ENCODE measurements at regions of chr5 and their contacts with region 1.

Region 1: DNA sequence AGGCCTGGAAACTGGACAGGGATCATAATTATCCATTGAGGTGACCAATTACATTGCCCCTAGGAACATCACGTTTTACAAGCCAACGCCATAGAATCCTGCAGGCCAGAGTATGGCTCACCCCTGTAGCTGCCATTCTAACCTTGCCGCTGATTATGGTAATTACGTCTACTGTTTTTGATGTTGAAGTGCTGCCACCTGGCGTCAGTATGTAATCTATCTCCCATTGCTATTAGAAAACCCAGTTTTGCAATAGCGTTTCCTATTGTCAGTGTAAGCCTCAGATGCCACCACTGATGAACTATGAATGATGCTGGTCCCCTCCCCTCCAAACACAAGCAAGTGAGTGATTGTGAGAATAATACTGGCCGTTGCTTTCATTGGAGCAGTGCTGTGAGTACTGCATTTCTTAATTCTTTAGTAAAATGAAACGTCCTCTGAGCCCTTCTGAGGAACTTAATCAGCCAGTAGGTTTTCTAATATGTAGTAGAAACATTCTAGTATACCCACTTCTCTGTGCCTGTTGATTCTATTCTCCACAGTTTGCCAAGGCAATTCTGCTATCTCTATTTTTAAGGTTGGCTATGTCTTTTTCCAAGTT is 100.5 kb upstream of the NMUR2 start:
- DNase-seq: peak in 8 of 10 donors; percentile 41 to 87 (median 58)
- H3K4me3 ChIP-seq: peak overlapping the region in 5 of 59 donors; percentile 3 to 11 (median 4)
- H3K27ac ChIP-seq: peak overlapping the region in 7 of 59 donors; percentile 12 to 44 (median 28)
- H3K27me3 ChIP-seq: peaks cover 0 to 4% (median 0%) of the 10 kb centered on the region in 45 donors
- CTCF ChIP-seq: peak; percentile 39 to 91 (median 81)

Region 2: DNA sequence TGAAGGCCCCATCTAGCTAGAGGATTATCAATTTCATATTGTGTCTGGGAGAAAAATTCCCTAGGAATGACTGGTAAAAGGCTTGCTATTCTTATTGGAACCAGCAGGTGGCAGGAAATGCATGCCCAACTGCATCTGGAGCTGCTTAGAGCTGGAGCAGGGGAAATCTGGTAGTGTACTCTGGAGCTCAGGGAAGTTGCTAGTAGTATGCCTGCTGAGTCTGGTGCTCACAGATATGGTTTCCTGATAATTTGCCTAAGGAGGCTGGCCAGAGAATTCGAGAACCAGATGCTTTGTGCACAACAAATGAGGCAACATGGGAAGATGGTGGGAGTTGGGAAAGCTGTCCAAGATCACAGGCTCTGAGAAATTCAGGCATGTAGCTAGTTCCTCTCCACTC is 680.1 kb before region 1 on chr5:
- intact Hi-C with region 1: loop called (anchors 2 to 5 kb)
- DNase-seq: peak in 8 of 10 donors; percentile 37 to 67 (median 60)
- H3K4me3 ChIP-seq: no peak overlapping the region
- H3K27ac ChIP-seq: peak overlapping the region in 1 of 59 donors; percentile 11
- H3K27me3 ChIP-seq: no peaks in the 10 kb centered on the region
- CTCF ChIP-seq: peak; percentile 77 to 97 (median 89)

Region 3: DNA sequence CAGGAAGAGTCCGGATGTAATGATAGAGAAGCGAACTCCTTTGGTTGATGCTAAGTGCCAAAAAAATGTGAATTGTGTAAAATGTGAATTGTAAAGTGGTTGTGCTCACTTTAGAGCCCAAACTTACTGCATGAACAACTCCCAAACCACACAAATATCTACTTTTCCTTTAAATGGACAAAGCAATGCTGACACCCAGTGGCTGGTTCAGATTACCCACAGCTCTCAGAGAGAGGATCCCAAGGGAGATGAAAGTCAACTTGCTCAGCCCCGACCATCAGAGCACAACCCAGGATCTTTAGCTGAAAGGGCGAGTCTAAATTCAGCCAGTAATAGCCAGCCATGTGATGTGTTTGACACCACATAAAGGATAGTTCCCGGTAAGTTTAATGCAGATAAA is 234.1 kb before region 1 on chr5:
- intact Hi-C with region 1: loop called in 1 of 2 experiments (anchors 5 kb)
- DNase-seq: peak in 5 of 10 donors; percentile 8 to 49 (median 35)
- H3K4me3 ChIP-seq: no peak overlapping the region
- H3K27ac ChIP-seq: no peak overlapping the region
- H3K27me3 ChIP-seq: no peaks in the 10 kb centered on the region
- CTCF ChIP-seq: peak in 52 of 56 donors; percentile 34 to 70 (median 50)

Region 4: GRCh38 chr5:152379331-152379730 is 126.2 kb before region 1 on chr5:
- intact Hi-C with region 1: loop called (anchors 2 to 10 kb)
- DNase-seq: no peak
- H3K4me3 ChIP-seq: no peak overlapping the region
- H3K27ac ChIP-seq: peak overlapping the region in 50 of 59 donors; percentile 4 to 94 (median 81)
- H3K27me3 ChIP-seq: no peaks in the 10 kb centered on the region
- CTCF ChIP-seq: peak in 51 of 56 donors; percentile 13 to 77 (median 51)

Region 5: DNA sequence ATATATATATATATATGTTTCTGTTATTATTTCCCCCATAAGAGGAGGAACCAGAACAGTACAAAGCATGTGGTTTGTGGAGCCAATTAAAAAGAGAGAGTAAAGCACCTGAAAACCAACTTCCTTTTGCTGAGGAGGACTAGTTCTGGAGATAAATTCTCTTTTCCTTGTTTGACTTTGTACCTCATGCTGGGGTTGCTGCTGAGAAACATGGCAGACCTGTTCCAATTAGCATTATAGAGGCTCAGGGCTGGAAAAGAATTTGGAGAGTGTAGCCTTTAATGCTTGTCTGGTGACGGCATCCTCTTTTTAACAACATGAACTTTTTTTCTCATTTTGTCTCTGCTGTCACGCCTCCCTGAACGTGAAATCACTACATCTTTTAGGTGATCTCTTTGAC is 67.7 kb before region 1 on chr5:
- intact Hi-C with region 1: loop called in 1 of 2 experiments (anchors 10 kb)
- DNase-seq: no peak
- H3K4me3 ChIP-seq: no peak overlapping the region
- H3K27ac ChIP-seq: peak overlapping the region in 5 of 59 donors; percentile 10 to 97 (median 92)
- H3K27me3 ChIP-seq: no peaks in the 10 kb centered on the region
- CTCF ChIP-seq: no peak